Thyroid gland (tissue), 4 donors: ENCODE measurements at regions of chr9 and their contacts with region 1.

Region 1: DNA sequence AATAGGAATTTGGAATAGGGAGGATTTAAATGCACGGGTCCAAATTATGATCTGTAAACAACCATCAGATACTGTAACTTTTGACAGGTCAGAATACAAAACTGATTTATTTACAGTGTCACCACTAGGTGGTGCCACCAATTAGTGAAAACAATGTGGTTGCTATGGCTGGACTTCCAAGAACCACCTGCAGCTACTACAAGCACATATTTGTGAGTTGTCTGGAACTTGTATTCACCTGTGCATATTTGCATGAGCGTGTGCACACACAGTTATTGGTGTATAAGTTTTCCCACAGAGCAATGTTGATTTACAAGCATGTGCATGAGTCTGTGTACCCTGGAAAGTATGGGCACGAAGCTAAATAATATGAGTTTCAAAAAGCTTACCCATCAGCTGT is 3.0 kb upstream of the HRCT1 start:
- DNase-seq: peak; percentile 38 to 41
- H3K4me3 ChIP-seq: no peak overlapping the region
- H3K27ac ChIP-seq: no peak overlapping the region
- H3K4me1 ChIP-seq: peaks cover 37 to 39% of the 10 kb centered on the region in 2 donors
- H3K27me3 ChIP-seq: no peaks in the 10 kb centered on the region
- CTCF ChIP-seq: peak; percentile 64 to 90 (median 82)
- POLR2A ChIP-seq: no peak

Region 2: DNA sequence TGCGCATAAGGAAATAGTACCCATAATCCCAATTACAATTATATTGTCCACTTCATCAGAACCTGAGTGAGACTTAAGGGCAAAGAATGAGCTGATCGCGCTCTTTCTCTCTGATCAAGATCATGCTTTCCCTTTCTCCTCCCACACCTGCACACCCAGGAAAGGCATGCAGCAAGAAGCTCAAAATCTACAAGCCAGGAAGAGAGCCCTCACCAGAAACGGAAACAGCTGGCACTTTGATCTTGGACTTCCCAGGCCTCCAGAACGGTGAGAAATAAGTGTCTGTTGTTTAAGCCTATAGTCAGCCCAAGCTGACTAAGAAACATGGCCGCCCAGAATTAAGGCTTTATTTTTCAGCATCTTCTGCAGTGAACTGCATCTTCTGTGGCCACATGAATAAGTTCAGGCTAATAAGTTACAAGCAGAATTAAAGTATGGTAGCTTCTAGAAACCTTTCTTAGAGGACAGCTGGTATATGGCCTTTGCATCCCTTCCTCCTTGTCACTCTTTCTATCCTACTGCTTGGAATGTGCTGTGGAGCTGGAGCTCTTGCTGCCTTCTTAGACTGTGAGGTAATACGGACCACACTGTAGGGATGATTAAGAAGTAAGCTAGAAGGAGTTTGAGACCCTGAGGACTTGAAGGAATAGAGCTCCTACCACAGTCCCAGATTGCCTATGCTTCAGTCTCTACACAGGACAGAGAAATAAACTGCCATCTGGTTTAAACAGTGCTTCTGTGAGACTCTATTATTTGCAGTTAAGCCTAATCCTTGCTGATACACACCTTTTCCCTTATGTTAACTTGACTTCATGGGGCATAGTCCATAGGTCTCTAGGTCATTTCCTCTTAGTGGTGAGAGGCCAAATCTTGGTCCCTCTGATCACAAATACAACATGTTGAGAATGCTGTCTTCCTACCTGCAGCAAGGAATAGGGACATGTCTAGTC is 37.7 kb after region 1 on chr9:
- intact Hi-C with region 1: loop called (anchors 5 kb)
- DNase-seq: no peak
- H3K4me3 ChIP-seq: no peak overlapping the region
- H3K27ac ChIP-seq: no peak overlapping the region
- H3K4me1 ChIP-seq: peaks cover 34 to 65% of the 10 kb centered on the region in 2 donors
- H3K27me3 ChIP-seq: no peaks in the 10 kb centered on the region
- CTCF ChIP-seq: no peak
- POLR2A ChIP-seq: no peak

Region 3: DNA sequence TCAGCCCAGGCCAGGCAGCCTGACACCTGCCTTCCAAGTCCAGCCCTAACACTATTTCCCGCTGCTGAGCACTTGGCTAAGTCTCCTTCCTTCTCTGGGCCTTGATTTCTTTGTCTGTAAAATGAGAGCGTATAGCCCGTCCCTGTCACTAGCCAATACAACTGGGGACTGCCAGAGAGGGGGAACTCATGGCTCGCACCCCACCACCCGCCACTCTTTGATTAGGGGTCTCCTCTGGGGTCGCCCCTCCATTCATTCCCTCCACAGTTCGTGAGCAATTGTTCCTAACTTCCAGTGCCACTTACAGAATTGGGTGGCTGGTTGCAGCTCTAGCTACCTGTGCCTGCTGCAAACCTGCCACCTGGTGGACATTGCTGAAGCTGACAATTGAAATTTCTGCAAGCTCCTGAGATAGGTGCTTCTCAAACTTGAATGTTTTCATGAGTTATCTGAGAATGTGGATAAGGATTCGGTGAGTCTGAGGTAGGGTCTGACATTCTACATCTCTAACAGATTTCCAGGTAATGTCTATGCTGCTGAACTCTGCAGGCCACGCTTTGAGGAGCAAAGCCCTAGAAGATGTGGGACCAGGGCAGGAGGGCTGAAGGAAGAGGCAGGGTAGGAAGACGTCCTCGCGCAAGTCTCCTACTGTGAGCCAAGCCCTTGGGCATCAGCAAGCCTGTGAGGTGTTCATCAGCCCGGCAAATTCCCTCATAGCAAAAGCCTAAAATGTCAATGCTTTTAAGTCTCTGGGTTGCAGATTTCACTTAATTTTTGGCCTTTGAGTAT is 120.4 kb after region 1 on chr9:
- intact Hi-C with region 1: loop called (anchors 5 kb)
- DNase-seq: peak; percentile 78 to 81
- H3K4me3 ChIP-seq: no peak overlapping the region
- H3K27ac ChIP-seq: no peak overlapping the region
- H3K4me1 ChIP-seq: peaks cover 0 to 3% of the 10 kb centered on the region in 2 donors
- H3K27me3 ChIP-seq: no peaks in the 10 kb centered on the region
- CTCF ChIP-seq: peak; percentile 32 to 87 (median 82)
- POLR2A ChIP-seq: no peak